Activated B cell treated with CpG ODN at 0.5 μM for 24 hours (primary cell): ENCODE measurements at regions of chr11 and their contacts with region 1.

Region 1: GRCh38 chr11:77619576-77620198 is 17.9 kb downstream of the CLNS1A start:
- DNase-seq: no peak
- ATAC-seq: no peak
- H3K4me3 Mint-ChIP-seq: no peak overlapping the region
- H3K27ac Mint-ChIP-seq: no peak overlapping the region
- H3K4me1 Mint-ChIP-seq: no peaks in the 10 kb centered on the region
- H3K27me3 Mint-ChIP-seq: no peaks in the 10 kb centered on the region
- CTCF ChIP-seq: no peak

Region 2: GRCh38 chr11:76734456-76735420 is 884.9 kb before region 1 on chr11:
- CTCF ChIA-PET with region 1: no interaction called
- POLR2A ChIA-PET with region 1: no interaction called
- intact Hi-C with region 1: loop called (anchors 5 kb)
- DNase-seq: no peak
- ATAC-seq: no peak
- H3K4me3 Mint-ChIP-seq: no peak overlapping the region
- H3K27ac Mint-ChIP-seq: no peak overlapping the region
- H3K4me1 Mint-ChIP-seq: no peaks in the 10 kb centered on the region
- H3K27me3 Mint-ChIP-seq: peaks cover 5% of the 10 kb centered on the region
- CTCF ChIP-seq: no peak

Region 3: DNA sequence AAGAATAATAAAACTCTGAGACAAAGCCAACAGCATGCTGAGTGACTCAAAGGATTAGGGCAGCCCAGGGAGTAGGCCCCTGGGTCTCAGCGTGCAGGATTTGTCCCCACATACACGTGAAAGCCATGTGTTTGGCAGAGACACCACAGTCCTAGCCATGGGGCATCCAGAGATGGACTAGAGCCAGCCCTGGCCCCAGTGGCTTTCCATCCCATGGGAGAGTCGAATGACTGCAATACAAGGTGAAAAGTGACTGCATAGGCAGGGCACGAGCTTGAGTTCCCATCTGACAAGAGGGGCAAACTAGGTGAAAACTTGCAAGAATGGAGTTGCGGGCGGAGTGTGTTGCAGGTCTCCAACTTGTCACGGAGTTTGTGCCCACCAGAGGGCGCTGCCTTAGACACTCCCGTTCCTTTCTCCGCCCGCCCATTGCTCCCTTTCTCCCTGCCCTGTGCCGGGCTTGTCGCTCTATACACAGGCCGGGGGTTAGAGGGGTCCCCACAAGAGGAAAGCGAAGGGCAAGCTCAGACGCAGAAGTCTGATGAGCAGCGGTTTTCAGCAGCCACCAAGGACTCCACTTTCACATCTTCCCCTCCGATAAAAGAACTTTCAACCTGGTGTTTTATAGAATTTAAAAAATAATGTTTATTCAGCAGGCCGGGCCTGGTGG is 812.3 kb before region 1 on chr11:
- CTCF ChIA-PET with region 1: no interaction called
- POLR2A ChIA-PET with region 1: no interaction called
- intact Hi-C with region 1: loop called (anchors 5 kb)
- DNase-seq: peak; percentile 52
- ATAC-seq: peak; percentile 65
- H3K4me3 Mint-ChIP-seq: no peak overlapping the region
- H3K27ac Mint-ChIP-seq: no peak overlapping the region
- H3K4me1 Mint-ChIP-seq: peaks cover 7% of the 10 kb centered on the region
- H3K27me3 Mint-ChIP-seq: peaks cover 54% of the 10 kb centered on the region
- CTCF ChIP-seq: peak; percentile 74

Region 4: GRCh38 chr11:77127232-77127911 is 492.3 kb before region 1 on chr11:
- CTCF ChIA-PET with region 1: interaction called, 13 read pairs
- POLR2A ChIA-PET with region 1: no interaction called
- intact Hi-C with region 1: loop called (anchors 1 kb)
- DNase-seq: peak; percentile 57
- ATAC-seq: peak; percentile 76
- H3K4me3 Mint-ChIP-seq: peak overlapping the region; percentile 57
- H3K27ac Mint-ChIP-seq: no peak overlapping the region
- H3K4me1 Mint-ChIP-seq: peaks cover 19% of the 10 kb centered on the region
- H3K27me3 Mint-ChIP-seq: peaks cover 6% of the 10 kb centered on the region
- CTCF ChIP-seq: peak; percentile 24

Region 5: DNA sequence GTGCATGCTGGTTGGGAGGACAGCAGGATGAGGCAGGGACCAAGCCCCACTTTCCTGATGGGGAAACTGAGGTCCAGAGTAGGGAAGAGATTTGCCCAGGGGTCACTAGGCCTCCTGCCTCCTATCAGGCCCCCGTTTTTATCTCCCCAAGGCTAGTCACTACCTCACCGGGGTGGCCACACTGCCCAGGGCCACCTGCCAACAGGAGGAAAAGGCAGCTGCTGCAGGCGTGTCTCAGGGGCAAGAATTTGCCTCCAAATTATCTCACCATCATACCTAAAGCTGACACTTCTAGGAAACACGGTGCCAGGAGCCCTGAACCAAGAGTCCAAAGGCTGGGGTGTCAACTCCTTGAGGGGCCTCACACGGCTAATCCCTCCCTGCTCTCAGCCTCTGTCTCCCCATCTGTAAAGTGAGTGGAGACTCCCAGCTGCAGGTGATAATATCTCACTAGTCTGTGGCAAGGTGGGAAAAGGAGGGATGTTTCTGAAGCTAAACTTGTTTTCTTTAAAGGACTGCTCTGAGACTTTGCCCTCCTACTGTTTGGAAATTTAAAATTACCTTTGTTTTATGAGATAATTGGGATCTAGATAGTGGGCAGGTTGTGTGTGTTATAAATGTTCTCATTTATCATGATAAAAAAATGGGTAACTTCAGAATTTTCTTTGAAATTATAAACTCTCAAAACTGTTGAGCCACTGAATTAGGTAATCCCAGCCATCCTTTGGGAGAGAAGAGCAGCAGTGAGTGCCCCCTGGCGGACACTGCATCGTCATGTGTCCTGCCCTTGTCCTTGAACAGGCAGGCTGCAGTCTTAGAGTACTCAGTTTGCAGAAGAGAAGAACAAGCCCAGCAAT is 431.7 kb before region 1 on chr11:
- CTCF ChIA-PET with region 1: interaction called, 3 read pairs
- POLR2A ChIA-PET with region 1: no interaction called
- intact Hi-C with region 1: loop called (anchors 2 kb)
- DNase-seq: peak; percentile 35
- ATAC-seq: peak; percentile 54
- H3K4me3 Mint-ChIP-seq: no peak overlapping the region
- H3K27ac Mint-ChIP-seq: no peak overlapping the region
- H3K4me1 Mint-ChIP-seq: no peaks in the 10 kb centered on the region
- H3K27me3 Mint-ChIP-seq: no peaks in the 10 kb centered on the region
- CTCF ChIP-seq: peak; percentile 41